ENCODE measurements at regions of chr11 and their contacts with region 1.

Region 1: DNA sequence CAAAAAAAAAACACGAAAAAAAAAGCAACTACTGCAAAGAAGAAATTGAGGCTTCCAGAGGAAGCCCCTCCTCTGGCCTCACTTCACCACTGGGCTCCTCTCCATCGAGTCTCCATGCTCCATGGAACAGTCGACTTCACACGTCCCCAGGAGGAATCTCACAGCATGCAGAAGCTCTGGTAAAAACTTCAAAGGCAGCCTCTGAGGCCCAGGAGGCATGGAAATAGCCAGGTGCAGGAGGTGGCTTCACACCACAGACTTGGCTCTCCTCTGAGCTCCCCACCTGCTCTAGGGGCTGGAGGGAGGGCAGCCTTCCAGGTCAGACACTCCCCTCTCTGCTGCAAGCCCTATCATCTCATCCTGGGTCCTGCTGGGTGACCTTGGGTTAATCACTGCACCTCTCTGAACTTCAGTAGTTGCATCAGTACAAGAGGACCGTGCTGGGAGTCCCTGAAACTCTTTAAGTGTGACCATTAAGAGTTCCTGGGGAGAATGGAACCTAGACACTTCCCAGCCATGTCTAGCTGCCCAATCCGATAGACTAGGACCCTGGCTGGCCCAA is 8.2 kb downstream of the PDE2A start:
- DNase-seq: no peak

Region 2: GRCh38 chr11:72069787-72070251 is 596.2 kb before region 1 on chr11:
- intact Hi-C with region 1: no loop called
- DNase-seq: peak; percentile 96

Region 3: DNA sequence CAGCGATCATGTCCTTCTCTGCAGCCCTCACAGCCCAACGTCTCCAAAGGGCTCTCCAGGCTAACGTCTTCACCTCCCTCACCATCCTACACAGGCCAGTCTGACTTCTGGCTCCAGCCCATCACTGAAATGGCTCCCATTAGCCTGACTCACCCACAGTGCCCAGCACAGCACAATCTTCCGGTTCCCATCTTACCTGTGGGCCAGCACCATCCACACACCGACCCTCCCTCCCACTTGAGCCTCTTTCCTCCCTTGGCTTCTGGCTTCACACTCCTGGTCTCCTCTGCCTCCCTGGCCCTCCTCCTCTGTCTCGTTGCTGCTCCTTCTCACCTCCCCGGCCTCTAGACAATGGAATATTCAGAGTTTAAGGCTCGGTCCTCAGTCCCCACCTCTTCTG is 42.9 kb before region 1 on chr11:
- intact Hi-C with region 1: loop called in 1 of 2 experiments (anchors 2 kb)
- DNase-seq: no peak

Region 4: DNA sequence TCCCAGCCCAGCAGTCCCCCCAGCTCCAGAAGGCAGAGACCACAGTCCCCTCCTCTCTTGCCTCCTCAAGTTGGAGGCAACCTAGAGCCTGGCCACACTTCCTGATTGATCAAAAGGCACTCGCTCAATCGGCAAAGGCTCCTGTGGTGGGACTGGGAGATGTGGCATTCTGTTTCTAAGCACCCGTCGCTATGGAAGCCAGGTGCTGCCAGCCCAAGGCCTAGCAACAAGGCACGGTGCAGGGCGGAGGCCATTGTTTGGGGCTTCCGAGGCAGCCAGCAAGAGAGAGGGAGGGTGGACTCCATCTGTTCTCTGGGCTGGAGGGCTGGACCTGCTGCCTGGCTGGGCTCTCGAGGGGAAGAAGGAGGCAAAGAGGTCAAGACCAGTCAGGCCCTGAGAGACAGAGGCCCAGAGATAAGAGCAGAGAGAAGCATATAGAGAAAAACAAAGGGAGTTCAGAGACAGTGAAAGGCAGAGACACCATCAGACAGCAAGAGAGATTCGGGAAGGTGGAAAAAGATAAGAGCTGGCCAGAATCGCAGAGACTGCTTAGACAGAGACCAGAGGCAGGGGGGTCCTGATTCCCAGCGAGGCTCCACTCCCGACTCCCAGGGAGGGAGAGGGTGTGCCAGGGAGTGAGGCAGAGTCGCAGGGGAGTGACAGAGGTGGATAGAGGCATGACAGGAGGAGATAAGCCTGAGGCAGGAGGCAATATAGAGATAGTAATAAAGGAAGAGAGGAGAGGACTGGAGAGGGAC is 12.9 kb before region 1 on chr11:
- intact Hi-C with region 1: no loop called
- DNase-seq: no peak

Measured in posterior vena cava (tissue), 2 donors.